Sciatic nerve (tissue), 2 donors: ENCODE measurements at regions of chr5 and their contacts with region 1.

Region 1: GRCh38 chr5:105936833-105937232 is 1733.9 kb downstream of the EFNA5 start:
- DNase-seq: no peak
- ATAC-seq: no peak

Region 2: GRCh38 chr5:105917189-105917588 is 19.6 kb before region 1 on chr5:
- intact Hi-C with region 1: loop called (anchors 1 kb)
- DNase-seq: no peak
- ATAC-seq: no peak

Region 3: GRCh38 chr5:105968931-105969330 is 32.1 kb after region 1 on chr5:
- intact Hi-C with region 1: no loop called
- DNase-seq: no peak
- ATAC-seq: no peak